Dendritic cell treated with granulocyte-macrophage colony-stimulating factor and Interleukin-4, amounts not matched to agents 40 ng/mL and 50 ng/mL, for 4 days (primary cell): ENCODE measurements at regions of chr5 and their contacts with region 1.

Region 1: DNA sequence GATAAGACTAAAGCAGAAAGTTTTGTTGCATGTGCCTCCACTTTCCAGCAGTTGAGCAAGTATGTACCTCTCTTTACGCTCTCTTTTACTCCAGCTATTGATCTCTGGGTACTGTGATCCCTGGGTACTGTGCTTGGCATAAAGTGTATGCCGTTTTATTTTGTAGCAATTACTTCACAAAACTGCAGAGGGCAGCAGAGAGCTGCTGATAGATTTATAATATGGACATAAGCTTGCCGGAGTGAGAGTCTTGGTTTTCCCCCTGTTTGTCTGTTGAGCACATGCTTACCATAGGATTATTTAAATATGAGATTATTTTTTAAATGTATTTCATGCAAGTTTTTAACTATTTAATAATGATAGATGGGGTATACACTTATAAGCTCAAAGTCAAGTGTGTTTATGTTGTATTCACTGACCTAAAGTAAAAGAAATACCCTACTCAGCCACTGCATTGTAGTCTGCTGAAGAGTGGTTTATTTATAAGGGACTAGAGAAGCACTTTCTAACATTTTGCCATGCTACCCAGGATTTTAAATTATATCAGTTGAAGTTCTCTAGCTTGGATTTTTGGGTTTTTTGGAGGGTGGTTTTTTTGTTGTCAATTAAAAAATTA is 13.0 kb downstream of the TTC1 start:
- H3K4me3 Mint-ChIP-seq: no peak overlapping the region
- H3K27ac Mint-ChIP-seq: no peak overlapping the region
- H3K4me1 Mint-ChIP-seq: peaks cover 18% of the 10 kb centered on the region
- H3K27me3 Mint-ChIP-seq: no peaks in the 10 kb centered on the region

Region 2: DNA sequence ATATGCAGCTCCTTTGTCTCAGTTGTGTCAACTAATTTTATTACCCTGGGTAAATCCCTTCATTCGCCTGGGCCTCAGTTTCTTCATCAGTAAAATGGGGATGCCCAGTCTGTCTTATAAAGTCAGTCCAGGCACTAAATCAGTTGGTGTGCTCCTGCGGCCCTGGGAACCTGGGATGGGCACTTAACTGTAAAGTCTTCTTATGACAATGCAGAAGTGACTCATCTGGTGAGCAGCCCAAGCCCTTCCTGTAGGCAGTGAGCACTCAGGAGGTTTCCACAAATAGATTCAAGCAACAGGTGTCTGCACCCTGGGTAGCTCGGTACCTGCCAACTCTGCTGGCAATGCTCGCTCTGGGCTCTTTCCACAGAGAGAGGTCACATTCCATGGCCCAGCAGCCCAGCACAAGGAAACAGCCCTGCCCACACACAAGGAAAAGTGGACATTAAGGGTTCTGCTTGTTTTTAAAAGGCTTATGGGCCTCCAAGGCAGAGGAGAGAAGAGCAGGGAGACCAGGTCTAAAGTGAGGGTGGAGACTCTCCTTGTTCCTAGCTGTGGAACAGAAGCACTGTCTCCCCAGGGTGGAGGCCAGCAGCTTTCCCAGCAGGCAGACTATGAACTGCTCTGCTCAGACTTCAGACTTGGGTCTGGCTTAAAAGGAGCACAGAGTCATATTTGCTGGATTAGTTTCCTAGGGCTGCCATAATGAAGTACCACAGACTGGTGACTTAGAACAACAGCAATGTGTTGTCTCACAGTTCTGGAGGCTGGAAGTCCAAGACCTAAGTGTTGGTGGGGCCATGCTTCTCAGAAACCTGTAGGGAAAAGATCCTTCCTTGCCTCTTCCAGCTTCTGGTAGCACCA is 195.4 kb before region 1 on chr5:
- intact Hi-C with region 1: no loop called
- H3K4me3 Mint-ChIP-seq: no peak overlapping the region
- H3K27ac Mint-ChIP-seq: peak overlapping the region; percentile 33
- H3K4me1 Mint-ChIP-seq: peaks cover 10% of the 10 kb centered on the region
- H3K27me3 Mint-ChIP-seq: peaks cover 22% of the 10 kb centered on the region

Region 3: DNA sequence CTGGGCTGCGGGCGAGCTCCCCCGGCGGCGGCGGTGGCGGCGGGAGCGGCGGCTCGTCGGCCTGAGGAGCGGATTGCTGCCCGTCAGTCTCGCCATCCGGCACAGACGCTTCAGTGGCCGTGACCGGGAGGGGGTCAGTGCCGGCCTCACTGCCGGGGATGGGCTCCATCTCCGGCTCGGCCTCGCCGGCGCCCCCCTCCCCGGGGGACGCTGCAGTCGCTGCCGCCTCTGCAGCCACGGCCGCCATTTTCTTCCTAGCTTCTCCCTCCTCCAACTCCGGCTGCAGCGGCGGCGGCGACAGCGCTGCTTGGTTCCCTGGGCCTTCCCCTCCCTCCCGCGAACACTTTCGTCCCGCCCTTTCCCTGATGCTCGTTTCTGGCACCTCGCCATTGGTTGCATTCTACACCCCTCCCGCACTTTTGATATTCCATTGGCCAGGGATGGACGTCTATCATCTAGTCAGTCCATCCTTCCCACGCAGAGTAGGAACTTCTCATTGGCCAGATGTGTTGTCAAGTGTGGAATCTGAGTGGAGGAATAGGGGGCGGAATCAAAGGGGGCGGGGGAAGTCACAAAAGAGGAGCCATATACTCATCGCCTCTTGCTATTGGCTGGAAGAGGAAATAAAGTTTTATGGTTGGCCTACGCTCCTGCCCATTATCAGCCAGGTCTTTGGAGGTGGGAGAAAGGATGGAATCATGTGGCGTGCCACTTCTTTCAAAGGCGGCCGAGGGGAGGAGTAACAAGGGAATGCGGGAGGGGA is 97.4 kb after region 1 on chr5 and contains the start of gene PWWP2A:
- intact Hi-C with region 1: loop called (anchors 10 kb)
- H3K4me3 Mint-ChIP-seq: peak within 1 kb of the TSS; percentile 87
- H3K27ac Mint-ChIP-seq: peak within 1 kb of the TSS; percentile 91
- H3K4me1 Mint-ChIP-seq: peaks cover 8% of the 10 kb centered on the region
- H3K27me3 Mint-ChIP-seq: peaks cover 12% of the 10 kb centered on the region

Region 4: GRCh38 chr5:160199410-160199911 is 177.5 kb after region 1 on chr5:
- intact Hi-C with region 1: loop called (anchors 5 kb)
- H3K4me3 Mint-ChIP-seq: peak overlapping the region; percentile 60
- H3K27ac Mint-ChIP-seq: no peak overlapping the region
- H3K4me1 Mint-ChIP-seq: peaks cover 24% of the 10 kb centered on the region
- H3K27me3 Mint-ChIP-seq: peaks cover 26% of the 10 kb centered on the region

Region 5: DNA sequence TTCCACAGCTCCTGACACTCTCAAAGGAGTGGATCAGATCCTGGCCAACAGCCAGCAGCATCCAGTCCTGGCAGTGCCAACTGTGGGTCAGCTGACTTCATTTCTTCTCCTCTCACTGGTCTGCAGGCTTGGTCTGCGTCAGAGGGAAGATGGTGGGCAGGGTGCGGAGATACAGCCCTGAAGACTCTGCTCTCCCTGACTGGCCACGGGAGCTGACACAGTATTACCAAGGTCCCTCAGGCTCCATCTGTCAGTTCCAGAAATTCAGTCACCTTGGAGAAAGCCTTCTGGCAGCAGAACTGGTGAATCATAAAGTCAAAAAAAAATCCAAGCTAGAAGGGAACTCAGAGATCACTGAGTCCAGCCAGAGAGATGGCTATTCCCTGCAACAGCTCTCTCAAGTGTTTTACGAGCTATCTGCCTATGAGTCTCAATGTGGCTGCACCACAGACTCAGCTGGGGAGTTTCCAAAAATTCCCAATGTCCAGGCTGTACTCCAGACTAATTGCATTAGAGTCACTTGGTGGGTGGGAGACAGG is 320.5 kb after region 1 on chr5:
- intact Hi-C with region 1: loop called (anchors 5 kb)
- H3K4me3 Mint-ChIP-seq: no peak overlapping the region
- H3K27ac Mint-ChIP-seq: no peak overlapping the region
- H3K4me1 Mint-ChIP-seq: no peaks in the 10 kb centered on the region
- H3K27me3 Mint-ChIP-seq: peaks cover 9% of the 10 kb centered on the region

Region 6: GRCh38 chr5:160390787-160391696 is 369.1 kb after region 1 on chr5:
- intact Hi-C with region 1: loop called (anchors 2 kb)
- H3K4me3 Mint-ChIP-seq: no peak overlapping the region
- H3K27ac Mint-ChIP-seq: no peak overlapping the region
- H3K4me1 Mint-ChIP-seq: no peaks in the 10 kb centered on the region
- H3K27me3 Mint-ChIP-seq: no peaks in the 10 kb centered on the region

Region 7: GRCh38 chr5:161637591-161637990 is 1615.7 kb after region 1 on chr5:
- intact Hi-C with region 1: no loop called
- H3K4me3 Mint-ChIP-seq: no peak overlapping the region
- H3K27ac Mint-ChIP-seq: no peak overlapping the region
- H3K4me1 Mint-ChIP-seq: no peaks in the 10 kb centered on the region
- H3K27me3 Mint-ChIP-seq: no peaks in the 10 kb centered on the region